Sciatic nerve (tissue), 2 donors: ENCODE measurements at regions of chr9 and their contacts with region 1.

Region 1: DNA sequence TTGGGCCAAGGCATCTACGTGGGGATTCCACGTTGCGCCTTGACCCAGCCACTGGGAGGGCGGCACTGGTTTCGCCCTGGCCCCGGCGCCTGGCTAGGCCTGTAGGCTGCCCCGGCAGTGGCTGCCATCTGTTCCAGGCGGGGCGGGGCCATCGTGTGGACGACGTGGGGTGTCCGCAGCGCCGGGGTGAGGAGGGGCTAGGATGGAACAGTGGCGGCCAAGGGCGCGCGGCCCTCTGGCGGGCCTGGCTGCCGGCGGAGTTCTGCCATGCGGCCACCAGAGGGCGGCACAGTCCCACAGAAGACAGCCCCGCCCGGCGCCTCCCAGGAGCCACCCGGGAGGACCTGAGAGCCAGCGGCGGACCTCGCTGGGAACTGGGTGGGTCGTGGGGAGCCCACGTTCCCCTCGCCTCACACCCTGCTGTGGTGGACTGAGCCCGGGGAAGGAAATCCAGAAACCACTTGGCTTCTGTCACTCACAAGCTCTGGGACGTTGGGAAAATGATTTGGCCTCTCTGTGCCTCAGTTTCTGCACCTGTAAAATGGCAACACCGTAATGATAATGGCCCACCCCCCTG is 22.6 kb upstream of the RAPGEF1 start:
- DNase-seq: peak; percentile 85
- ATAC-seq: peak; percentile 91

Region 2: GRCh38 chr9:131237931-131238401 is 524.5 kb before region 1 on chr9:
- intact Hi-C with region 1: no loop called
- DNase-seq: peak; percentile 81
- ATAC-seq: peak; percentile 81

Region 3: GRCh38 chr9:132235946-132236661 is 473.7 kb after region 1 on chr9:
- intact Hi-C with region 1: loop called (anchors 5 kb)
- DNase-seq: peak; percentile 89
- ATAC-seq: no peak

Region 4: DNA sequence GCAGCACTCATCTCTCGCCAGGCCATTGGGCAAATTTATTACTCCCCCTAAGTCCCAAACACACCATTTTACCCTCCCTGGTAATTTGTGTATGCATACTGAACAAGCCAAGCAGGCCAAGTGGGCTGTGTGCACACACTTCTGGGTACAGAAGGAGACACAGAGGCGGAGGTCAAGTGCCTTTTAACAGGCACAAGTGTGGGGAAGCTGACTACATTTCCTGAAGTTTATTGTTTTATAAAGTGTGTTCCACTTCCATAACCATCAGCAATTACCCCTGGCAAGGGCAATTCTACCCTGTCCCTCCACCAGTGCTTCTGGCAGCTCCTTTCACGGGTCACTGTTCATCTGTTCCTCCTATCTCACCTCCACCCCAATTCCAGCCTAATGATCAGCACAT is 498.4 kb after region 1 on chr9:
- intact Hi-C with region 1: loop called (anchors 1 kb)
- DNase-seq: no peak
- ATAC-seq: no peak